Transverse colon (tissue), 4 donors: ENCODE measurements at regions of chr14 and their contacts with region 1.

Region 1: DNA sequence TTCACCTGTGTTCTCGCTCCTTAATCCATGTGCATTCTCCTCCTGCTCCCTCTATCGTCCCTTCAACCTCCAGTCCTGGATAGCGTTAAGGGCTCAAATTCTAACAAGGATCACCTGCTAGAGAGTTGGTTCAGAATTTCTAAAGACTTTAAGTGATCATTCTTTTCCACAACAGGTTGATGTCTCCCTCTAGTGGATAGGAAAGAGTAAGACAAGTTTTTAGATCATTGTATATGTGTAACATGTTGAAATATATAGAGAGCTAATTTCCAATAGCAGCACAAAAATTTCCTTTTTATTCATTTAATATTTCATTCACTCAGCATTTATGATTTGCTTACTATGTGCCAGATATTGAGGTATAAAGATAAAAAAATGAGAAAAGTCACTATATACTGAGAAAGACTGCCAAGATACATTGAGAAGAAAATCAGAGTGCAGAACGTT is 9.3 kb upstream of the ESR2 start:
- DNase-seq: no peak
- H3K4me3 ChIP-seq: no peak overlapping the region
- H3K27ac ChIP-seq: no peak overlapping the region
- H3K4me1 ChIP-seq: no peaks in the 10 kb centered on the region
- H3K27me3 ChIP-seq: no peaks in the 10 kb centered on the region
- CTCF ChIP-seq: peak; percentile 65 to 79 (median 72)
- EP300 ChIP-seq: no peak
- POLR2A ChIP-seq: no peak

Region 2: DNA sequence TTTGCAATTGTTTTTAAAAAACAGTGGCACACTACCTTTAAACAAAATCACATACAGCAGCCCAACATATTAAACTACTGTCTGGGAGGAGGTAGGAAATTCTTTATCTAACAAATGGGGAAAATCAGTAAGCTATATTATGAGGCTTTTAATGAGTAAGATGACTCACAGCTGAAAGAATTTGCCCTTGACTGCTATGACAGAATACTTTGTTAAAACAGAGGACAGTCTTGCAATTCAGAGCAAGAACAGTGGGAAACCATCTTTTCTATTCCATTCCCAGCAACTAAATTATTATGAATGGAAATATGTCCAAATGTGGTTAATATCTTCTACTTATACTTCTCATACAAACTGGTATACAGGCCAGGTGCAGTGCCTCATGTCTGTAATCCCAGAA is 526.5 kb before region 1 on chr14:
- in situ Hi-C with region 1: loop called in 3 of 4 experiments (anchors 25 kb)
- intact Hi-C with region 1: no loop called
- DNase-seq: no peak
- H3K4me3 ChIP-seq: no peak overlapping the region
- H3K27ac ChIP-seq: no peak overlapping the region
- H3K4me1 ChIP-seq: no peaks in the 10 kb centered on the region
- H3K27me3 ChIP-seq: no peaks in the 10 kb centered on the region
- CTCF ChIP-seq: no peak
- EP300 ChIP-seq: no peak
- POLR2A ChIP-seq: no peak

Region 3: GRCh38 chr14:63795532-63795931 is 508.0 kb before region 1 on chr14:
- in situ Hi-C with region 1: loop called (anchors 10 to 25 kb)
- intact Hi-C with region 1: no loop called
- DNase-seq: no peak
- H3K4me3 ChIP-seq: no peak overlapping the region
- H3K27ac ChIP-seq: no peak overlapping the region
- H3K4me1 ChIP-seq: peaks cover 0 to 11% (median 2%) of the 10 kb centered on the region in 4 donors
- H3K27me3 ChIP-seq: no peaks in the 10 kb centered on the region
- CTCF ChIP-seq: no peak
- EP300 ChIP-seq: no peak
- POLR2A ChIP-seq: no peak

Region 4: GRCh38 chr14:64005822-64006221 is 297.7 kb before region 1 on chr14:
- in situ Hi-C with region 1: loop called in 1 of 4 experiments (anchors 25 kb)
- intact Hi-C with region 1: no loop called
- DNase-seq: no peak
- H3K4me3 ChIP-seq: no peak overlapping the region
- H3K27ac ChIP-seq: no peak overlapping the region
- H3K4me1 ChIP-seq: no peaks in the 10 kb centered on the region
- H3K27me3 ChIP-seq: no peaks in the 10 kb centered on the region
- CTCF ChIP-seq: no peak
- EP300 ChIP-seq: no peak
- POLR2A ChIP-seq: no peak

Region 5: DNA sequence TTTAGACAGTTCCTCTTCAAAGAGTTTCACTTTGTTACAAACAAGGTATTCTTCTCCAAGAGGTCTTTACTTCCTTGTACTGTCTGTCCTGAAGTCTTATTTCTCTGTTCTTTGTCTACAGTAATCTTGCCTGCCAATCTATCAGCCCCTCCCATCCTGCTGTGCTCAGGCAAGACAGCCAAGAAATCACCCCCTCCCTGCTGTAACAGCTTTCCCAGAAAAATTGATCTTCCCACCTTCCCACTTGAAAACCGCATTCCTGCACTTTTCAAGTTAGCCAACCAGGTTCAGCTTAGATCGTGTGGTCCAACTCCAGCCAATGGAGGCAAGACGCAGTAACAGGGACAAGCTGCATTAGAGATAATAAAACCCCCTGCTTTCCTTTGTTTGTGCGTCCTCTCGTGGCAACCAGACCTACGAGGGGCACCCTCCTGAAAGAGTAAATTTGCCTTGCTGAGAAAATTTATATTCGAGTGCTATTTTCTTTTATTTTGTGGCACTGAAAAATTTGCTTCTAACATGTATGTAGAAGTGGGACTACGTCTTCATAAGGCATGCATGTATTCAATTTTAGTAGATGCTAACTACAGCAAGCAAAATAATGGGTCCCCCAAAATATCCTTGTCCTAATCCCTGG is 37.2 kb after region 1 on chr14:
- in situ Hi-C with region 1: no loop called
- intact Hi-C with region 1: no loop called
- DNase-seq: no peak
- H3K4me3 ChIP-seq: no peak overlapping the region
- H3K27ac ChIP-seq: no peak overlapping the region
- H3K4me1 ChIP-seq: peaks cover 0 to 12% (median 5%) of the 10 kb centered on the region in 4 donors
- H3K27me3 ChIP-seq: no peaks in the 10 kb centered on the region
- CTCF ChIP-seq: no peak
- EP300 ChIP-seq: no peak
- POLR2A ChIP-seq: no peak